ENCODE measurements at regions of chr15 and their contacts with region 1.

Region 1: DNA sequence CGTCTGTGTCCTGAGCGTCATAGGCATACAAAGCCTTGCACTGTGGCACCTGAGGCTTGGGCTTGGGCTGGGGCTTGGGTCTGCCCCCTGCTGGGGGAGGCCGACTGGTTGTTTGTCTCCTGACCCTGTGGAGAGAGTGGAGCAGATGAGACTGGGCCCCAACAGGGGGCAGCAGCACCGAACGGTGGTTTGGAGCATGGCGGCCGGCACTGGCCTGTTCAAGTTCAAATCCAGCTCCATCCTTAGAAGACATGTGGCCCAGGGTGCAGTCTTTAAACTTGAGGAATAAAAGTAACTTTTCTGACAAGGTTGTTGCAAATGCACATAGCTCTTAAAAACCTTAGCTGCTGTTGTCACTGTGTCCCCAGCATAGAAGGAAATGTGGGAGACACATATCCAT is 33.3 kb downstream of the CCNB2 start:
- DNase-seq: peak; percentile 78
- H3K4me3 ChIP-seq: no peak overlapping the region
- H3K27ac ChIP-seq: no peak overlapping the region
- H3K4me1 ChIP-seq: no peaks in the 10 kb centered on the region
- CTCF ChIP-seq: peak; percentile 99

Region 2: DNA sequence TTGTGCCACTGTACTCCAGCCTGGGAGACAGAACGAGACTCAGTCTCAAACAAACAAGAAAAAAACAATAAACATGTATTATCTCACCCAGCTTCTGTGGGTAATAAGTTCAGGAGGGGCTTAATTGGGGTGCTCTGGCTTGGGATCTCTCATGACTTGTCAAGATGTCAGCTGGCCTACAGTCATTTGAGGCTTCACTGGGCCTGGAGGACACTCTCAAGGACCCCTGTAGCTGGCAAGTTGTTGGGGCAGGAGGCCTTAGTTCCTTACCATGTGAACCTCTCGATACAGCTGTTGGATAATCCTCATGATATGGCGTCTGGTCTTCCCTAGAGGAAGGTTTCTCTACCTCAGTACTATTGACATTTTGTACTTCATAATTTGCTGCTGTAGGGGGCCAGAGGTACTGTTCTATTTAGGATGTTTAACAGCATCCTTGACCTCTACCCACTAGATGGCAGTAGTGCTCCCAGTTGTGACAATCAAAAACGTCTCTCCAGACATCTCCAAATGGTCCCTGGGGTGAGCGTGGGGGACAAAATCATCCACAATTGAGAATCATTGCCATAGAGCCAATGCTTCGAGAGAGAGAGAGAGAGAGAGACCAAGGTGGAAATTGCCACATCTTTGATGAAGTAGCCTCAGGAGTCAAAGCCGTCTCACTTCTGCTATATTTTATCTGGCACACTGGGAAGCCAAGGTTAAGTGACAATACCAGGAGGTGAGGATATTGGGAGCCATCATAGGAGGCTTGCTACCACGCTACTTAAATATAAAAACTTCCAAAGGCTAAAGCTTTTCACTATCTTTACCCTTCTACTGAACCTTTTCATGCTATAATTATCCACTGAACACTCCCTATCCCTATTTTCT is 180.9 kb before region 1 on chr15:
- CTCF ChIA-PET with region 1: no interaction called
- POLR2A ChIA-PET with region 1: no interaction called
- intact Hi-C with region 1: loop called (anchors 2 kb)
- DNase-seq: peak; percentile 88
- H3K4me3 ChIP-seq: no peak overlapping the region
- H3K27ac ChIP-seq: no peak overlapping the region
- H3K4me1 ChIP-seq: peaks cover 8% of the 10 kb centered on the region
- CTCF ChIP-seq: peak; percentile 97

Region 3: DNA sequence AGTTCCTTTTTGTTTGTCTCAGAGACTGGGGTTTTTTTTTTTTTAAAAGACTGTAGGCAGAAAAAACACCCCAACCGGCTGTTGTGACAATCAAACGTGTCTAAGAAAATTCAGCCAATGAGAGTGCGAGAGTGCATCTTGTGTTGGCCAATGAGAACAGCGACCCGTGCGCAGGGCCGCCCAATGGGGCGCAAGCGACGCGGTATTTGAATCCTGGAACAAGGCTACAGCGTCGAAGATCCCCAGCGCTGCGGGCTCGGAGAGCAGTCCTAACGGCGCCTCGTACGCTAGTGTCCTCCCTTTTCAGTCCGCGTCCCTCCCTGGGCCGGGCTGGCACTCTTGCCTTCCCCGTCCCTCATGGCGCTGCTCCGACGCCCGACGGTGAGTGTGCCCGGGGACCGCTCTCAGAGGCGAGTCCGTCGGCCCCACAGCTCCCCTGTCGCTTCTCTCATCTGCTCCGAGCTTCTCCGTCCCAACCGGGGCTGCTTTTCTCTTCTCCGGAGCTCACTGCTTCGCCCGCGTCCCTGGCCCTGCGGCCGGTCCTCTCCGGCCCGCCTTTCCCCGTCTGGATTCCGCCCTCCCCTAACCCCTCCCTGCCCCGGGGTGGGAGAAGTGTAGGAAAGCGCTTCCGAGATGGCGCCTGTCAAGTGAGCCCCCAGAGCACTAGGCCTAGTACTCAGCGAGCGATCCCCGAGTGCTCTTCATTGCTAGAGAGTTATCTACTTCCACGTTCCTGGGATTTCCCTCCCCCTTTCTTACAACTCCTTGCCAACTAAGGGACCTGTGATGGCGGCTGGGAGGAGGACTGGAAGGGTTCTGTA is 33.1 kb before region 1 on chr15 and contains the start of gene CCNB2:
- CTCF ChIA-PET with region 1: no interaction called
- POLR2A ChIA-PET with region 1: interaction called, 6 read pairs
- intact Hi-C with region 1: loop called (anchors 1 kb)
- DNase-seq: peak; percentile 96
- H3K4me3 ChIP-seq: peak within 1 kb of the TSS; percentile 90
- H3K27ac ChIP-seq: peak within 1 kb of the TSS; percentile 83
- H3K4me1 ChIP-seq: peaks cover 20% of the 10 kb centered on the region
- CTCF ChIP-seq: no peak
- total RNA-seq, gene CCNB2: 87.9 and 93.9 TPM in 2 replicates

Region 4: GRCh38 chr15:59158701-59159034 is 20.4 kb after region 1 on chr15:
- CTCF ChIA-PET with region 1: no interaction called
- POLR2A ChIA-PET with region 1: no interaction called
- intact Hi-C with region 1: no loop called
- DNase-seq: no peak
- H3K4me3 ChIP-seq: no peak overlapping the region
- H3K27ac ChIP-seq: no peak overlapping the region
- H3K4me1 ChIP-seq: no peaks in the 10 kb centered on the region
- CTCF ChIP-seq: no peak

Measured in OCI-LY7 (cell line).